IMR-90 (cell line): ENCODE measurements at regions of chr16 and their contacts with region 1.

Region 1: DNA sequence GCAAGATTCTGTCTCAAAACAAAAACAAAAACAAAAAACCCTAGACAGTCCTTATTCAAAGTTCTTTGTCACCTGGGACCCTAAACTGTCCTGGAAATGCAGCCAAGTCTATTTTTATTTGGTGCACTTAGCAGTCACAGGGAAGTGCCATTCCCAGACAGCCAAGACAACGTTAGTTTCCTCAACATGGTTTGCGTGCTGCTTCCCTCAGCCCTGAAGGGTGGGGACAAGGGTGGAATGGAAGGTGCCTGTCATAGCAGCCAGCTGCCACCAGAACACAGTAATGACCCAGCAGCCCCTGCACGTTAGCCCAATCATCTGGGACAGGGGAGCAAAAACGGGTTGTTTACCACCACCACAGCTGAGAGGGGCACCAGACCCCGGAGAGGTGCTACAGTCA is 16.9 kb downstream of the CREBBP start:
- DNase-seq: no peak
- ATAC-seq: no peak
- H3K4me3 ChIP-seq: no peak overlapping the region
- H3K27ac ChIP-seq: no peak overlapping the region
- H3K4me1 ChIP-seq: peaks cover 16% of the 10 kb centered on the region
- H3K27me3 ChIP-seq: no peaks in the 10 kb centered on the region
- CTCF ChIP-seq: no peak
- POLR2A ChIP-seq: no peak
- RAD21 ChIP-seq: no peak

Region 2: DNA sequence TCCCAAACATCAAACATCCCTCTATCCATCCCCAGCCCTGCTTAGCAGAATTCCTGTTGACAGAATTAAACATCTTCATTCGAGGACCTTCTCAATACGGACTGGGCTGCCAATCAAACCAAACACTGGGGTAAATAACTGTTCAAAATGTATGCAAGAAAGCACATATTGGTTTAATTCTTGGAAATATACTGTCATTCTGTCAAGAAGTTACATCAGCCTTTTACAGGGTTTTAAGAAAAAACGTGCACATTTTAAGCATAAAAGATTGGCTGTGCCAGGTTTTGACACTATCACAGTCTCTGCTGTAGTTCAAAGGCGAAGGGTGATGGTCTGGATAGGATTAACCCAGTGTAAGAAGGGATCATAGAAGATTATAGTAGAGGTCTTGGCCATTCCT is 1459.5 kb before region 1 on chr16:
- CTCF ChIA-PET with region 1: no interaction called
- POLR2A ChIA-PET with region 1: no interaction called
- dilution Hi-C with region 1: no loop called
- in situ Hi-C with region 1: no loop called
- intact Hi-C with region 1: no loop called
- DNase-seq: no peak
- ATAC-seq: no peak
- H3K4me3 ChIP-seq: no peak overlapping the region
- H3K27ac ChIP-seq: no peak overlapping the region
- H3K4me1 ChIP-seq: no peaks in the 10 kb centered on the region
- H3K27me3 ChIP-seq: peaks cover 10% of the 10 kb centered on the region
- CTCF ChIP-seq: no peak
- POLR2A ChIP-seq: no peak
- RAD21 ChIP-seq: no peak

Region 3: DNA sequence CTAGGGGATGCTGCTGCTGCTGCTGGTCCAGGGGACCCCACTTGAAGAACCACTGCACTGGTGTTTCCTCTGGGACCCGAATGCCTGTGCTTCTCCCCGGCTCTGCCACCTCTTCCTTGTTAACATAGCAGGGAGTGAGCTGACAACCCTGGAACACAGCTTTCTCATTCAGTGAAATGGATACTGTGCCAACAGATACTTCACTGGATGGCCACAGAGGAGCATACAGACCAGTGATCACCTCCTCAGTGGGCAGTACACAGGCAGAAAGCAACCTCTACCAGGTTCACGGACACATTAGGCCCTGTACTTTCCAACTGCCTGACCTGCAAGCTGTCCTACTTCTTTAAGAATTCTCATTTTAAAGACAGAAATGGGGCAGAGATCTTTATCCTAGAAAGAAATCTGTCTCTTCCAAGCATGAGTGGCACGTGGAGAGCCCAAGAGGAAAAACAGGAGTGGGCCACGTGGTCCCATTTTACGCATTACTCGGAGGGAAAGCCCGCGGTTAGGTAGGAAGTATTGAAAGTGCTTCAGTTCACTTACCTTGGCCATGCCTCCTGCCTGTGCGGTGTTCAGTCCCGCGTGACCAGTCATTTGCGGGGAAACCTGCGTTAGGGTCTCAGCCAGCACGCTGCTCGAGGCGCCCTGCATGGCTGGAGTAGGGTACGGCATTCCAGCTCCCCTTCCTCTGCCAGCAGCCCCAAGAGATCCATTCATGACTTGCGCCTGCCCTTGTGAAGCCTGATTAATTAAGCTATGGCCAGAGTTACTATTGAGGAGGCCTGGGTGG is 13.6 kb before region 1 on chr16:
- CTCF ChIA-PET with region 1: interaction called, 3 read pairs
- POLR2A ChIA-PET with region 1: interaction called, 11 read pairs
- dilution Hi-C with region 1: no loop called
- in situ Hi-C with region 1: no loop called
- intact Hi-C with region 1: no loop called
- DNase-seq: no peak
- ATAC-seq: peak; percentile 33; the same call in 1 of the 2 replicates
- H3K4me3 ChIP-seq: no peak overlapping the region
- H3K27ac ChIP-seq: peak overlapping the region; percentile 7; the same call in 1 of the 2 replicates
- H3K4me1 ChIP-seq: peaks cover 22% of the 10 kb centered on the region
- H3K27me3 ChIP-seq: no peaks in the 10 kb centered on the region
- CTCF ChIP-seq: no peak
- POLR2A ChIP-seq: no peak
- RAD21 ChIP-seq: no peak